Ovary (tissue), 10 donors: ENCODE measurements at regions of chr1 and their contacts with region 1.

Region 1: DNA sequence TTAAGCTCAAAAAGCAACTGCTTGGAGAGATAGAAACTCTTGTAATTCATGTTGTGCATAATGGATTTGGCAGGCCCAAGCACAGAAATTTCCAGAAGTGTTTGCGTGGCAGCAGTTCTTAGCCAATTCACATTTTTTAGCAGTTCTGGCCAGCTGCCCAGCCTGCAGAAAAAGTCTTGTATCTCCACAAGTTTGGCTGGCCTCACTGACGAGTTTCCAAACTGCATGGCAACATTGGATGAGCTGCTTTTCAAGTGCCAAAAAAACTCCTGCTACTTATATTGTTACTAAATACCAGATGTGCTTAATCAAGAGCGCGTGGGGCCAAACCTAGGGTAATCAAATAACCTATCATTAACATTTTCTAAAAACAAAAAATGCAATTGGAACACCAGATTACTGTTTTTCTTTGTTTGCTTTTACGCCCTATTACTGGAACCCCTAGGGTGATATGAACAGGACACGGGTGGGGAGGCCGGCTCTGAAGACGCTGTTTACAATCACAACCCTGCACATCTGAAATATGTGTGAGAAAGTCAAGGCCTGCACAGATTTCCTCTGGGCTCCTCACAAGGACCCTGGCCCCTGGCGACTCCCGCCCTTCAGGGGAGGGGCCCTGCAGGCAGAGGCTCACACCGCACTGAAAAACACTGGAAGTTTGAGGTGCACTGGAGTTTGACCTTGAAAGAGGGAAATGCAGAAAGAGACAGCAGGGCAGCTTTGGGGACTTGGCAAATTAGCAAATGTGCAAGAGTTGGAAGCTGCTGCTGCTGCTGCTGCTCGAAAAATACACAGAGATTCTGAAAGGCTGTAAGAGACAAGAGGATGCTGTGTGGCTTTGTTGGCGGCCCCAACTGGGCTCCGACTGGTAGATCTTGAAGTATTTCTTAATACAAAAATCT is 55.2 kb upstream of the TARBP1 start:
- DNase-seq: peak; percentile 94 to 99 (median 98)
- H3K4me3 ChIP-seq: no peak overlapping the region
- H3K27ac ChIP-seq: peak overlapping the region; percentile 84 to 98
- H3K4me1 ChIP-seq: peaks cover 44% of the 10 kb centered on the region
- H3K27me3 ChIP-seq: no peaks in the 10 kb centered on the region
- CTCF ChIP-seq: no peak
- EP300 ChIP-seq: peak; percentile 29
- POLR2A ChIP-seq: no peak

Region 2: DNA sequence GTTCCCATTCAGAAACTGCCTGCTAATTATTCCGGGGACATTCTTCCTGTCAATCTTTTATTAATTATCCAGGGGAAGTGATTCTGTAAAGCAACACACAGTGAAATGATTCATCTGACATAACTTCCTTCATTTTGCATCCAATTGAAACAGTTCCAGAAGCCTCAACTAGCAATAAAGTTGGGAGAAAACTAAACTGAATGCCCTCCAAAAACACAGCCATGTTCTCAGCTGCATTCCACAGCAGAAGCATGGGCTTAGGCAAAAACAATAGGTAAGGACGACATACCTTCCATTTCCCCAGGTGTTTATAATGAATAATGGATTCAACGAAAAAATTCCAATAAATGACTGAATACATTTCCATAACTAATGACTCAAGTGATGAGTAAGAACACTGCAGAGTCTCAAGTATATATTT is 18.4 kb before region 1 on chr1:
- intact Hi-C with region 1: no loop called
- DNase-seq: no peak
- H3K4me3 ChIP-seq: no peak overlapping the region
- H3K27ac ChIP-seq: no peak overlapping the region
- H3K4me1 ChIP-seq: no peaks in the 10 kb centered on the region
- H3K27me3 ChIP-seq: no peaks in the 10 kb centered on the region
- CTCF ChIP-seq: no peak
- EP300 ChIP-seq: no peak
- POLR2A ChIP-seq: no peak

Region 3: DNA sequence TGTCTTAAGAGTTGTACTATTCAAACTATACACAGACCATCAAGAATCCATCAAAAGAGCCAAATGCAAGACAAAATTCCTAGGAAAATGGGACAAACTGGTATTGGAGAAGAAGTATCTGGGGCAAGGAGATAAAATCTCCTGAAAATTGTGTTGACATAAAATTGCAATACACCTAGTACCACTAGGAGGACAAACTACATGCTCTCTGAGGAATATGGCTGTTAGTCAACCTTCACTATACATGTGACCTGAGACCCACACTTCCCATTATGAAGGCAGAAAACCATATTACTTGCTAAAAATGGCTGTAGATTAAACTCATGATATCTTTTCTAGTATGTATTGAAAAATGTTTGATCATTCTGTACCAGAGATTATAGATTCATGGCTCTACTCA is 45.7 kb after region 1 on chr1:
- intact Hi-C with region 1: loop called in 1 of 4 experiments (anchors 5 kb)
- DNase-seq: no peak
- H3K4me3 ChIP-seq: no peak overlapping the region
- H3K27ac ChIP-seq: no peak overlapping the region
- H3K4me1 ChIP-seq: peaks cover 10% of the 10 kb centered on the region
- H3K27me3 ChIP-seq: no peaks in the 10 kb centered on the region
- CTCF ChIP-seq: no peak
- EP300 ChIP-seq: no peak
- POLR2A ChIP-seq: no peak

Region 4: DNA sequence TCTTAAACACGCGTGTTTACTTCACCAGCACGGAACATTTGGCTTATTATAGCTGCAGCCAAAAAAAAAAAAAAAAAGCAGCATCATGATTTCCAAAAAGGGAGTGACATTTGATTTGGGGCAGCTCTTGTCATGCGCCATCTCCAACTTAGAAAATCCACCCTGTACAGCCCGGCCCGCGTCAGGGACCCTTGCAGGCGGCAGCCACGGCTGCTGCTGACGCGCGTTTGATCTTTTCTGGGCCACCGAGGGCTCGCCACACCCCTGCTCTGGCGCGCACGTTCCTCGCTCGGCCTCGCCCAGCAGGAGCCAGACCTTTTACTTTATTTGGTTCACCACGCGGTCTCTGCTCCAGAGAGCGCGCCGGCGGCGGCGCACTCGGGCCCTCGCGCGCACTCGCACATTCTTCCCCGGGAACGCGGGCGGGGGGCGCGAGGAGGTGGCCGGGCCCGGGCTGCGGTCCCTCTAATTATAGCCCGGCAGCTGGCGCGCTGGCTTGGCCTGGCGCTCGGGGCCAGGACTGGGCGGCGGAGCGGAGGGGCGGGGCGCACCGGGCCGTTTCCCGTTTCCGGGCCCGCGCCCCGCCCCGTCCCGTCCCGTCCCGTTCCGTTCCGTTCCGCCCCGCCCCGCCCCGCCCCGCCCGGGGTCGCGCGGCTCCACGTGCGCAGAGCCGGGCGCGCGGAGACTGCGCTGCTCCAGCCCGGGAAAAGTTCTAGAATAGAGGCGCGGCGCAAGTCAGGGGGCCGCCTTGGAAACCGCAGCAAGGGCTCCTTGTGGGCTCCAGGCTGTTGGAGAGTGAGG is 65.6 kb after region 1 on chr1:
- intact Hi-C with region 1: loop called in 3 of 4 experiments (anchors 5 kb)
- DNase-seq: peak; percentile 85 to 92 (median 88)
- H3K4me3 ChIP-seq: peak overlapping the region; percentile 51
- H3K27ac ChIP-seq: peak overlapping the region; percentile 82 to 97
- H3K4me1 ChIP-seq: peaks cover 3% of the 10 kb centered on the region
- H3K27me3 ChIP-seq: no peaks in the 10 kb centered on the region
- CTCF ChIP-seq: peak in 1 of 3 donors; percentile 23
- EP300 ChIP-seq: peak; percentile 75
- POLR2A ChIP-seq: peak; percentile 57

Region 5: GRCh38 chr1:234610348-234611152 is 76.3 kb after region 1 on chr1:
- intact Hi-C with region 1: loop called in 2 of 4 experiments (anchors 5 kb)
- DNase-seq: peak; percentile 96 to 98 (median 97)
- H3K4me3 ChIP-seq: peak overlapping the region; percentile 46
- H3K27ac ChIP-seq: peak overlapping the region; percentile 85 to 98
- H3K4me1 ChIP-seq: peaks cover 19% of the 10 kb centered on the region
- H3K27me3 ChIP-seq: no peaks in the 10 kb centered on the region
- CTCF ChIP-seq: peak in 2 of 3 donors; percentile 37 to 53
- EP300 ChIP-seq: no peak
- POLR2A ChIP-seq: peak; percentile 95

Region 6: DNA sequence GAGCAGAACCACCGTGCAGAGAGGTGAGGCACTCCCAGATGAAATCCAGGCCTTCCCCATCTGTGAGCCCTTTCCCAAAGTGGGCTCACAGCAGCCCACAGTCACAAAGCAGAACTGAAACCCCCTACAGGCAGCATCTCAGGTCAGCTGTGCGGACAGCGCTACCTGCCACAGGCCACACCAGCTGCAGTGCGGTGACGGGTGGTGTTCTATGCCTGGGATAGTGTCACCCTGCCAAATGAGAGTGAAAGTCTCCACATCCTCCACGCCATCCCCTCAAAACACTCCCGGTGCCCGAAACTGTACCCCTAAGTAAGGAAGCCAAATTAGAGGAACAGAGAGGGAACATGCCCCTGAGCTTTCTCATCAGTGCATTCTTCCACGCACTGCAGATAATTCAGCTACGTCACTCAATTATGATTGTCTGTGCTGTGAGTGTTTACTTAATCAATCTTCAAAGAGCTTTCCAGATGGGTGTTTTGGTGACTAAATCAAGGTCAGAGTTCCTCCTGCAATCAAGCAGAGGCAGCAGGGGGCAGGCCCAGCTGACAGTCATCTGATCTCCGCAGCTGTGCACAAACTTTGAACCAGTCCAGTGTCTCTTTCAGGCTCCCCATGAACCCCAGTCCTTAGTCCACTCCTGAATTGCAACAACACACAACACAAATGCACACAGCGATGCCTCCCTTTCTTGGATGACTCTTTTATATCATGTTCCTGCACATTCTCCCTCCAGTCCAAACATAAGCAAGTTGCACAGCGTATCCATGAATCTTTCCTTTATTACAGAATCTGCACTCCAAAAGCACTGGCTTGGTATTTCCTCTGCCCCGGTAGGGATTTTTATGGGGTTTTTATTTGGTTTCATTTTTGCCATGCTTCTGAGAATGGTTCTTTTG is 444.4 kb after region 1 on chr1:
- intact Hi-C with region 1: loop called in 2 of 4 experiments (anchors 10 kb)
- DNase-seq: peak in 1 of 5 donors; percentile 56
- H3K4me3 ChIP-seq: no peak overlapping the region
- H3K27ac ChIP-seq: peak overlapping the region in 1 of 2 donors; percentile 83
- H3K4me1 ChIP-seq: peaks cover 34% of the 10 kb centered on the region
- H3K27me3 ChIP-seq: no peaks in the 10 kb centered on the region
- CTCF ChIP-seq: no peak
- EP300 ChIP-seq: no peak
- POLR2A ChIP-seq: no peak

Region 7: DNA sequence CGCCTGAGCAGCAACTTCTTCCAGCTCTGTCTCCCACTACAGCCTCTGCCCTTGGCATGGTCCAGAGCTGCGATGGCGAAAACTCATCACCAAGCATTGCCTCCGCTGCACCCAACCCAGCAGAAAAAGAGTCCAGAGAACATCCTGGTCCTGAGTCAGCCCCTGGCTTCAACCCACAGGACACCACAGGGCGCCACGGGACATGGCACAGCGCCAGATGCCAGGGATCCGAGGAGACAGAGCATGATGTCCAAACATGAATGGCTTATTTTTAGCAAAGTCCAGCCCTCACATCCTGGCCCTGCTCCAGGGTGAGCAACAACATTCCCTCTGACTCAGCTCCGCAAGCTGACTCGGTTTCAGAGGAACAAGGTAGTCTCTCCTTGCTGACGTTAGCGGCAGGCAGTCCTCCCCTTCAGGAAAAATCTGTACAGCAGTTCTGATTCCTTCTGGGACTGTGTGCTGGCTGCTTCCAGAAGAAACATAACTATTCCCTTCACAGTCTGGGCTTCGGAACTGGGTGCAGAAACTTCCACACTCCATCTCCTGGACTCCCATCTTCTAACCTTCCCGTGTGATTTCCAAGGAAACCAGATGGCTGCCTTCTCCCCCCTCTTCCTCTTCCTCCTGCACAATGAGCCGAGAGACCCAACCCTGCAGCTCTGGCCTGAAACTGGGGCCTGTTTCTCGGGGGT is 463.1 kb after region 1 on chr1:
- intact Hi-C with region 1: loop called in 1 of 4 experiments (anchors 10 kb)
- DNase-seq: peak; percentile 93 to 97 (median 97)
- H3K4me3 ChIP-seq: no peak overlapping the region
- H3K27ac ChIP-seq: peak overlapping the region; percentile 62 to 64
- H3K4me1 ChIP-seq: peaks cover 9% of the 10 kb centered on the region
- H3K27me3 ChIP-seq: no peaks in the 10 kb centered on the region
- CTCF ChIP-seq: no peak
- EP300 ChIP-seq: peak; percentile 78
- POLR2A ChIP-seq: peak; percentile 22